Dendritic cell treated with granulocyte-macrophage colony-stimulating factor and Interleukin-4, amounts not matched to agents 40 ng/mL and 50 ng/mL, for 4 days (primary cell): ENCODE measurements at regions of chr1 and their contacts with region 1.

Region 1: GRCh38 chr1:2233997-2234761 is 6.1 kb downstream of the SKI start:
- H3K4me3 Mint-ChIP-seq: peak overlapping the region; percentile 95
- H3K27ac Mint-ChIP-seq: peak overlapping the region; percentile 82
- H3K4me1 Mint-ChIP-seq: peaks cover 94% of the 10 kb centered on the region
- H3K27me3 Mint-ChIP-seq: no peaks in the 10 kb centered on the region

Region 2: DNA sequence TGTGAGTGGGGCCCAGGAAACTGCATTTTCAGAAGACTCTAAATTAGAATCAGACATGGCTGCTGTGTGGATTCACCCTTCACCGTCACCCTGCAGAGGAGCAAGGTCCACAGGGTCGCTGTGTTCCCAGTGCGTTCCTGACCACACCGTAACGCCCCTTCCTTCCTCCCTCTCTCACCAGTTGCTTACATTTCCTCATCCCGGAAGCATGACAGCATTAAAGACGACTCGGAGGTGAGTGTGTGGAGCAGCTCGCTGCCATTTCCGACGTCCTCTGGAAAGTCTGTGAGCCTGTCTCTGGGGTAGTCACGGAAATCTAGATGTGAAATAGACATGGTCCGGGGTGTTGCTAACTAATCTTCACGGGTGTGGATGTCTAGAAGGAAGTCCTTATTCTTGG is 85.5 kb before region 1 on chr1:
- intact Hi-C with region 1: no loop called
- H3K4me3 Mint-ChIP-seq: no peak overlapping the region
- H3K27ac Mint-ChIP-seq: no peak overlapping the region
- H3K4me1 Mint-ChIP-seq: peaks cover 18% of the 10 kb centered on the region
- H3K27me3 Mint-ChIP-seq: no peaks in the 10 kb centered on the region

Region 3: DNA sequence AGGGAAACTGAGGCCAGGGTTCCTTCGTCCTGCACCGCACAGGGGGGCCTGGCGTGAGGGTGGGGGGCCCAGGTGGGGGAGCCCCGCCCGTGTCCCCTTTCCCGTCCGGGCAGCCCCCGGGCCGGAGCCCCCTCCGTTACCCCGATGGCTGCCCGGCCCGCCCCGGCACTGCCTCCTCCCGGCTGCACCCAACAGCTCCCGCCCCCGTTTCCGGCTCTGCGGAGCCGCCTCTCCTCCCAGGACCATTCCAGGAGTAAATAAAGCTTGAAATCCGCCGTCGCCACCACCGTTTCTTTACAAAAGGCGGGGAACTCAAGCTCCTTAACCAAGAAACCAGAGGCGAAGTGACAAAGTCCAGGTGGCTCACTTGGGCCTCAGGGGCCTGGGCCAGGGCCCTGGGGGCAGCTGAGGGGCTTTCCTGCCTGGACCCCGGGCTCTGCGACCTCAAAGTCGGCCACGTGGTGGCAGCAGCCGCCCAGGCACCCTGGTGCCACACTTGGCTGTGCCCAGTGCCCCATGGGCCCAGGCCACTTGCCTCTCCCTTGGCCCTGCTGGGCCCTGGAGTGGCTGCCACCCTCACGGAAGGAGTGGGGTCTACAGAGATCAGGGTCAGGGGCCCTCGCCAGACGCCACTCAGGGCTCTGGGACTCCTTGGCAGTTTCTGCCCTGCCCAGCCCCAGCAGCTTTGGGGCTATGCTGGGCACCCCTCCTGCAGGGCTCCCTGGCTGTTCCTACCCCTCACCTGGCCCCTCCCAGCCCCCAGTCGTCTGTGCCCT is 39.1 kb before region 1 on chr1:
- intact Hi-C with region 1: loop called (anchors 5 kb)
- H3K4me3 Mint-ChIP-seq: peak overlapping the region; percentile 80
- H3K27ac Mint-ChIP-seq: peak overlapping the region; percentile 91
- H3K4me1 Mint-ChIP-seq: peaks cover 52% of the 10 kb centered on the region
- H3K27me3 Mint-ChIP-seq: no peaks in the 10 kb centered on the region

Region 4: DNA sequence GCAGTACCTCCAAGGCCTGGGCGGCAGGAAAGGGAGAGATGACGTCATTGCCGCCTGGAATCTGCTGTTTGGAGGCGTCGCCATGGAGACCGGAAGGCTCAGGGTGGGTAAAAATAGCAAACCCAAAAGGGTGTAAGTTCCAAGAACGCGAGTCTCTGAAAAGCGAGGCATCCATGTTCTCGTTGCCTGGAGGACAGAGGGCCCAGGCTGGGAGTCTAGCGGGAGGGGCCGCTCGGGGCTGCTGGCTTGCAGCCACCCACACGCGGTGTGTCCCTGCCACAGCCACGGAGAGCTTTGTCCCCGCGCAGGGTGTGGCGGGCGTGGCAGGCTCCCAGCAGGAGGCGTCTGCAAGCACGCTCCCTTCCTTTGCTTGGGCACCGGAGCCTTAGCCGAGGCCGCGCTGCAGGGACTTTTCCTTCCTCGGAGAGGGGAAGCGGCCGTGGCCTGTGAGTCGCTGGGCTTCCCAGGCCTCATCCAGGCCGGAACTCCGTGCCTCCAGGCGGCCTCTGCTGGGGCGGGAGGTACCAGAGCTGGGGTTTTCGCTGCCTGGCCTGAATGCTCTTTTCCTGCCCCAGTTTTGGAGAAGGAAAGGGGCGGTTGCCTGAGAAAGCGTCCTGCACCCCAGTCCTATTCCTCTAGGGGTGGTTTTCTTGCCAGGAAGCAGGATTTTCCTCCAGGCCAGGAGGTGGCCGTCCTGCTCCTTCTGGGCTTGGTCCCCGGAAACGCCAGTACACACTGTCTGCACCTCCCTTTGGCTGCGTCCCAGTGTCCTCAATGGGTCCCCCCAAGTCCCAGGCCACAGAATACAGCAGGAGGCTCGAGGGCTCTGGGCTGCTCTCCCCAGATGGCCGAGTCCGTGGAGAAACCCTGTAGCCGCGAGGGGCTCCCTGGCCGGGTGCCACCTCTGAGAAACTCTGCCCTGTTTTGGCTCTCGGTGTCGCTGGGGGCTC is 21.4 kb before region 1 on chr1:
- intact Hi-C with region 1: loop called (anchors 2 kb)
- H3K4me3 Mint-ChIP-seq: peak overlapping the region; percentile 55
- H3K27ac Mint-ChIP-seq: peak overlapping the region; percentile 86
- H3K4me1 Mint-ChIP-seq: peaks cover 49% of the 10 kb centered on the region
- H3K27me3 Mint-ChIP-seq: peaks cover 26% of the 10 kb centered on the region

Region 5: GRCh38 chr1:2248127-2248826 is 14.1 kb after region 1 on chr1:
- intact Hi-C with region 1: loop called (anchors 2 kb)
- H3K4me3 Mint-ChIP-seq: no peak overlapping the region
- H3K27ac Mint-ChIP-seq: peak overlapping the region; percentile 13
- H3K4me1 Mint-ChIP-seq: peaks cover 94% of the 10 kb centered on the region
- H3K27me3 Mint-ChIP-seq: no peaks in the 10 kb centered on the region

Region 6: DNA sequence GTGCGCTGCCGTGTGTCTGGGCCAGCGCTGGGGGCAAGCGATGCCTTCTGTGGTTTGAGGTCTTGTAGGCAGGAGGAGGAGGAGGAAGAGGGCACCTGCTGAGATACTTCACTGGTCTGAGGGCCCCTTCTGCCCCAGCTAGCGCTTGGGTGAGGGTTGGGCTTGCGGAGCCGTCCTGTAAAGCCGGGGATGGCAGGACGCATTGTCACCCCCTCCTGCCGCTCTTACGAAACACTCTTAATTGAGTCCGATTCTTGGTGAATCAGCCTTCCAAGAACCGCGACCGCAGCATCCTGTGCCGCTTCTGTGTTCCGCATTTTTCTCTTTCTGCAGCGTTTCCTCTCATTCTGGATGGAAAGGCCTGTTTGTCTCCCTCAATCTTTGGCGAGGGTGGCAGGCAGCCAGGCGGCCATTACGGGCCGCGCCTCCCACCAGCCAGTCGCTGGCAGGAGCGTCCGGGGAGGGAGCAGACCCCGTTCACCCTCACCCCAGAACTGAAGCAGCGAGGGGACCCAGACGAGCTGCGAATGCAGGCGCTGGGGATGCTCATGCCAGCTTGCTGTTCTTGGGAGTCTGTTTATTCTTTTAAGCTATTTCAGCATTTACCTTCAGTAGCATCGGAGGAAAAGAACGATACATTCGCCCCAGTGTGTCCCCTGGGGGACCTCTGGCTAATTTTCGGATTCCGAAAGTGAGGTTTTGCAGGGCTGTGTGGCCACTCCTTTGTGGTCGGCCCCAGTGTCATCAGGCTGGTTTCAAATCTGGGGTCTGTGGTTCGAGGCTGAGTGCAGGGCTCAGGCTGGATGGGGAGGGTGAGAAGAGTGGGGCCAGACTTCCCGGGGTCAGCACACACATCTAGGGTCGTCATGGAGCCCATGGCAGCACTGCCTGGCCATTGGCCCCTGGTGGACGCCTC is 56.7 kb after region 1 on chr1:
- intact Hi-C with region 1: loop called (anchors 5 kb)
- H3K4me3 Mint-ChIP-seq: peak overlapping the region; percentile 71
- H3K27ac Mint-ChIP-seq: peak overlapping the region; percentile 96
- H3K4me1 Mint-ChIP-seq: peaks cover 100% of the 10 kb centered on the region
- H3K27me3 Mint-ChIP-seq: peaks cover 15% of the 10 kb centered on the region

Region 7: DNA sequence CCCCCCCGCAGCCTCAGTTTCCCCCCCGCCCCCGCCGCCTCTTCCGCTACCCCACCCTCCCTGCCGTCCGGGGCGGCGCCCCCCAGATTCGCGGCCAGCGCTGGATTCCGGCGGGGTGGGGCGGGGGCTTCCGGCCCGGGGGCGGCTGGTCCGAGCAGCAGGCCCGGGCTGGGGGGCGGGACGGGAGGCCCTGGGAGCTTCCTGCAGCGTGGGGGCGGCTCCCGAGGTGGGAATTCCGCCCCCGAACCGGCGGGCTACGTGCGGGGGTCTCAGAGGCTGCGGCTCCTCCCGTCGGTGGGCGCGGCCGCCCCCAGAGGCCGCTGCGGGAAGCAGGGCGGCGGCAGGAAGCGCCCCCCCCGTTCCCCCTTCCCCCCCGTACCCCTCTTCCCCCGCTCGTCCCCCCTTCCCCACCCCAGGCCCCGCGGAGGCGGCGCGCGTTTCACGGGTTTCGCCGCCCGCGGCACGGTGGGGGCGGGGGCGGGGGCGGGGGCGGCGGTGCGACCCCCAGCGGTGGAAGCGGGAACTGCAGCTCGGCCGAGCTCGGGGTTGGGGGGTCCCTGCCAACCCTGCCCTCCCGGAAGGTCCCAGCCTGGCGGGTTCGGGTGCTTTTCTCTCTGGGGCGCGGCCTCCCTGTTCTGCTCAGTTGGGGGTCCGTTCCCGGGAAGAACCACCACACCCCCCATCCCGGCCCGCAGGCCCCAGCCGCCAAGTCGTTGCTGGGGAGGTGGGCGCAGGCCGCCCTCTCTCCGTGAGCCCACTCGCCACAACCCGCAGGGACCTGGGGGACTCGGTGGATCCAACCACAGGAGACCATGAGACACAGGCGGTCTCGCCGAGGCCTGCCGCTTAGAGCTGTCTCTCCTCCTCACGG is 80.9 kb after region 1 on chr1:
- intact Hi-C with region 1: loop called (anchors 5 kb)
- H3K4me3 Mint-ChIP-seq: peak overlapping the region; percentile 64
- H3K27ac Mint-ChIP-seq: peak overlapping the region; percentile 87
- H3K4me1 Mint-ChIP-seq: peaks cover 55% of the 10 kb centered on the region
- H3K27me3 Mint-ChIP-seq: peaks cover 16% of the 10 kb centered on the region

Region 8: DNA sequence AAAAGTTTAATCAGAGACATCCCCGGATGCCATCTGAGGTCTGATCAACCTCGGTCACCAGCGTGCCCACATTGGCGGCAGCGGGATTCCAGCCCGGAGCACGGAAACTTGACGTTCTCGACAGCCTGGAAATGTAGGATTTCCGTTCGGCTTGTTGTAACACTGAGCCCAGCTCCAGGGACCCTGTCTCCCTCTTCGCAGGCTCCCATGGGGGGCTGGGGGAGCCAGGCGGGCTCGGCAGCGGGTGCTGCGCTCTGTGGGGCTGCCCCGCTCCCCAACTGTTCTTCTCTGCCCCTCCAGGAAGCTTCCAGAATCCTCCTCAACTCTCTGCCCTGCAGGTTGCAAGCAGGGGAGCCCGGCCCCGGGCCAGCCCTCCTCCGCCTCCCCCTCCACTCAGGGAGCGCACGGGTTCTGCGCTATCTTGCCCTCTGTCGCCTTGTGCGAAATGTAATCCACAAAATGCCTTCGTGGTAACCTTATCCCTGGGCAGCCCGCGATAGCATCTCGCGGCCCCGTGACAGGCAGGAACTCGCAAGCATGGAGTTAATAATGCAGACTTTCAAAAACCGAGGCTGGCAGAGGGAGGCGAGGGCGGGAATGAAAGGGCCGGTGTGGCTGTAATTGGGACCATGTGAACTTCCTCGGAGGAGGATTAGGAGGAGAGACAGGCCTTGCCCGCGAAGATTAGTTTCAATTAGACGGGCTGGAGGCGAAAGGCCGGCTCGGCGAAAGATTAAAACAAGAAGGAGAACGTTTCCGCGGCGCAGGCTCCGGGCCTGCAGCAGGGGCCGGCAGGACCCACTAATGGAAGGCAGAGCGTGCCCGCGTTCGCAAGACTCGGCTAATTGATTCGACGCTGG is 621.3 kb after region 1 on chr1:
- intact Hi-C with region 1: no loop called
- H3K4me3 Mint-ChIP-seq: no peak overlapping the region
- H3K27ac Mint-ChIP-seq: no peak overlapping the region
- H3K4me1 Mint-ChIP-seq: no peaks in the 10 kb centered on the region
- H3K27me3 Mint-ChIP-seq: no peaks in the 10 kb centered on the region